Activated naive CD4-positive, alpha-beta T cell treated with anti-CD3 and anti-CD28 coated beads for 36 hours (primary cell): ENCODE measurements at regions of chr1 and their contacts with region 1.

Region 1: DNA sequence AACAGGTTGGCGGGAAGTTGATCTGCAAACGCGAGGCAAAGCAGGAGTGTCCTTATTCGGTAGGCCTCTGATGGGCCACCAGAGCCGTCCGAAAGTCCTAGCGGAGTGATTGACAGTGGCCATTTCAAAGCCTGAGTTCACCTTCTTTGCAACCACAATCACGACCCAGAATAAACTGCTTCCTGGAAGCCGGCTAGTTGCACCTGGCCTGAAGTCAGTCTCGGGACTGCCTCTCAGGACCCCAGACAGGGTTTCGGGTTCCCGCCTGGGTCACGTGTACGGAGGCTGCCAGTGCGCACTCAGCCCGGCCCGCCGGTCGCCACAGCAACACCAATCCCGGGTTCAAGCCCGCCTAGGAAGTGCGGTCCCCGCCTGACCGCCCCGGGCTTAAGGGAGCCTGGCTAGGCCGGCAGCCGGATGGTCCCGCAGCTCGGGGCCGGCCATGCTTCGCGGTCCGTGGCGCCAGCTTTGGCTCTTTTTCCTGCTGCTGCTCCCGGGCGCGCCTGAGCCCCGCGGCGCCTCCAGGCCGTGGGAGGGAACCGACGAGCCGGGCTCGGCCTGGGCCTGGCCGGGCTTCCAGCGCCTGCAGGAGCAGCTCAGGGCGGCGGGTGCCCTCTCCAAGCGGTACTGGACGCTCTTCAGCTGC is at the start of gene TOR3A:
- DNase-seq: peak; percentile 85
- H3K4me3 Mint-ChIP-seq: peak within 1 kb of the TSS; percentile 98
- H3K27ac Mint-ChIP-seq: peak within 1 kb of the TSS; percentile 92
- H3K4me1 Mint-ChIP-seq: peaks cover 30% of the 10 kb centered on the region
- H3K27me3 Mint-ChIP-seq: no peaks in the 10 kb centered on the region
- total RNA-seq, gene TOR3A: 35.8 to 39.2 TPM

Region 2: DNA sequence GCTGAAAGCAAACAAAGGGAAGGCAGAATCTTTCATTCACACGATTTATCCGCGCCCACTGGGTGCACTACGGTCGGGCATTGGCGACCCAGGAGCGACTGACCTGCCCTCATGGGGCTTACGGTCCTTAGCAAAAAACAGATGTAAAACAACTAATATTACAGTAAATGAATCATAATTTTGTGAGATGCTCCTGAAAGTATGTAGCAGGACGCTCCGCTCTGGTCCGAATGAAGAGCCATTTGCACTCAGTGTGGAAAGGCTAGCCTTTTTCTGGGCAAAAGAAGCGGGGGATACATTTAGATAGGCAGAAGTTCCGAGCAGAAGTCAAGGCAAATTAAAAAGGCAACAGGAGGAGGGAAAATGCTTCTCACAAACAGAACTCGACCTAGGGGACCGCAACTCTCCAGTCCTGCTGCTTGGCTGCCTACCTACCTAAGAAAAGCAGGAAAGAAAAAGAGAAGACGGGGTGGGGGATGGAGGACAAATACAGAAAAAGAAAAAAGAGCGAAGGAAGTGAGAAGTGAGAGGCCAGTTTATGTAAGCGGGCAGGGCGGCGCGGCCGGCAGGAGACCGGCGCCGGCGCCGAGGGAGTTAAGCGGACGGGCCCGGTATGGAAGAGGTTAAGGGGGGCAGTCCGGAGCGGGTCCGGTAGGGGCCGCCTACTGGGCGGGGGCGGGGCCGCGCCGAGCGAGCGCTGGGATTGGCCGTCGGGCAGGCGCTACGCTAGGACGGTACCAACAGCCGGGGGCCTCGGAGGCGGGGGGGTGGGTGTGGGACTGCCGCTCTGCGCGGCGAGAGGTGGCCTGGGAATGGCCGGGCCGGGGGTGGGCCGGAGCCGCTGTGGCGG is 56.5 kb before region 1 on chr1 and contains the start of gene FAM20B:
- CTCF ChIA-PET with region 1: no interaction called
- intact Hi-C with region 1: loop called (anchors 1 kb)
- DNase-seq: peak; percentile 91
- H3K4me3 Mint-ChIP-seq: peak within 1 kb of the TSS; percentile 85
- H3K27ac Mint-ChIP-seq: peak within 1 kb of the TSS; percentile 78
- H3K4me1 Mint-ChIP-seq: peaks cover 34% of the 10 kb centered on the region
- H3K27me3 Mint-ChIP-seq: no peaks in the 10 kb centered on the region
- total RNA-seq, gene FAM20B: 35.1 to 36.1 TPM

Region 3: DNA sequence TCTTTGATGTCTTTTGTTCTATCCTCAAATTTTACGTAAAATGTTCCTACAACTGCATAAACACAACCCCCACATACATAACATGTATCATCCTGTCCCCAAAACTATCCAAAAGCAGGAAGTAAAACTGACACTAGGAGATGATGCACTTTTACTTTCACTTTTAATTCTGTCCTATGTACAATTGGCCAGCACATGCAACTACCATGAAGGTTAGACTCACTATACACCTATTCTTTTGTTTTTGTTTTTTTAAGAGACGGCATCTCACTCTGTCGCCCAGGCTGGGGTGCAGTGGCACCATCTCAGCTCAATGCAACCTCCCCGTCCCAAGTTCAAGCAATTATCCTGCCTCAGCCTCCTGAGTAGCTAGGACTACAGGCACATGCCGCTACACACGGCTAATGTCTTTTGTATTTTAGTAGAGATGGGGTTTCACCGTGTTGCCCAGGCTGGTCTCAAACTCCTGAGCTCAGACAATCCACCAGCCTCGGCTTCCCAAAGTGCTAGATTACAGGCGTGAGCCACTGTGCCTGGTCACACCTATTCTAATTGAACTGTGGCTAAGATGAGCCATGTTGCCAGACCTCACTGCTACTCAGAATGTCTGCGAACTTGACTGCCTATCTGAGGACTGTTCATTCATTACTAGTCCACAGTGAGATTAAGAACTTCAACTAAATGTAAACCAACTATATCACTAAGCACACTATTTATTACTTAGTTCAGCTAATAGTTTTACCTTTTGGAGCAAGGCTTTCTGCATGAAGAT is 48.1 kb after region 1 on chr1:
- CTCF ChIA-PET with region 1: no interaction called
- intact Hi-C with region 1: loop called (anchors 1 kb)
- DNase-seq: peak; percentile 24
- H3K4me3 Mint-ChIP-seq: peak overlapping the region; percentile 60
- H3K27ac Mint-ChIP-seq: peak overlapping the region; percentile 87
- H3K4me1 Mint-ChIP-seq: peaks cover 37% of the 10 kb centered on the region
- H3K27me3 Mint-ChIP-seq: no peaks in the 10 kb centered on the region

Region 4: DNA sequence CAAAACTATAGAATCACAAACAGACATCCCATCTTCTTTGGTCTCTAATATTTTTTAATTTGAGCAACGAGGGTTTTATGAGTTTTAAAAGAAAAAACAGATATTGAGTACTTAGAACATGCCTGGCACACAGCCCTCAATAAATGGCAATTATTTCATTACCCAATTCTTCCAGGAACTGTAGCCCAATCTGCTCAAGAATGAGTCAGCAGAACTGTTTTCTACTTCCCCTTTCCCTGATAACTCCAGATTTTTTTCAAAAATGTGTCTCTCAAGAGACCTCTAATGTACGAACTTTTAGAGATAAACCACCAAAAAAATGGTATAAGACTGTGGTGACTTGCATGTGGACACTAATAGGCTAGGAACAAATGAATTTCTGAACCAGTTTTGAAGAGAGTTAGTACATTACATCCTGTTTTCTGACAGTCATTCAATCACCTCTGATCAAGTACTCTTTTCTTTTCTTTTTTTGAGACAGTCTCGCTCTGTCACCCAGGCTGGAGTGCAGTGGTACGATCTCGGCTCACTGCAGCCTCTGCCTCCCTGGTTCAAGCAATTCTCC is 136.2 kb after region 1 on chr1:
- CTCF ChIA-PET with region 1: interaction called, 3 read pairs
- intact Hi-C with region 1: loop called (anchors 5 kb)
- DNase-seq: no peak
- H3K4me3 Mint-ChIP-seq: no peak overlapping the region
- H3K27ac Mint-ChIP-seq: no peak overlapping the region
- H3K4me1 Mint-ChIP-seq: peaks cover 20% of the 10 kb centered on the region
- H3K27me3 Mint-ChIP-seq: no peaks in the 10 kb centered on the region

Region 5: DNA sequence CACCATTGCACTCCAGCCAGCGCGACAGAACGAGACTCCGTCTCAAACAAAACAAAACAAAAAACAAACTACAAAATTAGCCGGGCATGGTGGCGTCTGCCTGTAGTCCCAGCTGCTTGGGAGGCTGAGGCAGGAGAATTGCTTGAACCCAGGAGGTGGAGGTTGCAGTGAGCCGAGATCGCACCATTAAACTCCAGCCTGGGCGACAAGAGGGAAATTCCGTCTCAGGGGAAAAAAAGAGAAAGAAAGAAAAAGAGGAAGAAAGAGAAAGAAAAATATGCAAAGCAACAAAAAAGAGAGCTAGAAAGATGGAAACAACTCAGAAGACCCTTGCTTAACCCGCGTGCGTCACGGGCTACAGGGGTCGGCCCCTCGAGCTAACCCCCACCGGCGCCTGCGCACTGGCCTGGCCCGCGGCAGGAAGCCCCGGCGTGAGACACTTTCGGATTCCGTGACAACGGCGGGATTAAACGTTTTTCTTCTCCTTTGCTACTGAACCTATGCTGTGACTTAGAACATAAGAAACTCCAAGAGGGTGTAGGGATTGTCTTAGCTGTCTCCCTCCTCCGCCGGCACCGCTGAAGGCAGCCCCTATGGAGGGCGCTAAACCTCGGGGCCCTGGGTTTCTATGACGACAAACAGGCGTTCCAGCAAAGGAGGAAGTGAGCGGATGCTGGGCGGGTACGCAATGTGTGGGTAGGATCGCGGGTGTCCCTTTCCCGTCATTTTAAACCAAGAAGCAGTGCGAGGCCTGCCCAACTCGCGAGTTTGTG is 283.7 kb after region 1 on chr1 and contains the start of gene AXDND1:
- CTCF ChIA-PET with region 1: interaction called, 65 read pairs
- intact Hi-C with region 1: loop called (anchors 1 kb)
- DNase-seq: peak; percentile 94
- H3K4me3 Mint-ChIP-seq: peak within 1 kb of the TSS; percentile 93
- H3K27ac Mint-ChIP-seq: peak within 1 kb of the TSS; percentile 100
- H3K4me1 Mint-ChIP-seq: peaks cover 21% of the 10 kb centered on the region
- H3K27me3 Mint-ChIP-seq: no peaks in the 10 kb centered on the region
- total RNA-seq, gene AXDND1: 0.57 to 0.67 TPM

Region 6: DNA sequence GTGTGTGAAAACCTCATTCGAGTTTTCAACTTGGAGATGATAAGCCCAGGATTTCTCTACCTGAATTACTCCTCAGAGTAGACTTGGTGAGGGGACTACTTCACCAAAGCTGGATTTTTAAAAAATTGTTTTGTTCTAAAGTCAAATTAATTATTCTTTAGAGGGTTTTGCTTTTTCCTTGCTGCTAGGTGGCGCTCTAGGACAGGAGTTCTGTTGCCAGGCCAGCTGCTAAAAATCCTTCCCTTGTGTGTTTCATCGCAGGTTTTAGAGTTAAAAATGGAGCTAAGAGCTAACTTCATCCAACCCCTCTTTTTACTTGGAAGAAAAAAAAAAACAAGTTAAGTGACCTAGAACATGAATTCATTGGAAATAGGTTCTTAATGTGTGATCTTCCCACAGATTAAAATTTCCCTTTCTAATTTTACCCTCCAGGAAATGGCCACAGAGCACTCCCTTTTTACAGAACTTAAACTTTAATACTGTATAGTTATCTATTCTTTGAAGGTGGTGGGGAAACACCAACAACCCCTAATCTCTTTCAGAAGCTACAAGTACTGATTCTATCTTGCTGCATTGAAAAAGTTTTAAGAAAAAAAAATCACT is 624.6 kb after region 1 on chr1:
- CTCF ChIA-PET with region 1: no interaction called
- intact Hi-C with region 1: loop called (anchors 5 kb)
- DNase-seq: peak; percentile 83
- H3K4me3 Mint-ChIP-seq: no peak overlapping the region
- H3K27ac Mint-ChIP-seq: no peak overlapping the region
- H3K4me1 Mint-ChIP-seq: peaks cover 23% of the 10 kb centered on the region
- H3K27me3 Mint-ChIP-seq: no peaks in the 10 kb centered on the region